Activated CD8-positive, alpha-beta memory T cell treated with anti-CD3 and anti-CD28 coated beads, Interleukin-2, amount 10 ng/mL, durations not matched to agents 7 days and 5 days (primary cell): ENCODE measurements at regions of chr22 and their contacts with region 1.

Region 1: DNA sequence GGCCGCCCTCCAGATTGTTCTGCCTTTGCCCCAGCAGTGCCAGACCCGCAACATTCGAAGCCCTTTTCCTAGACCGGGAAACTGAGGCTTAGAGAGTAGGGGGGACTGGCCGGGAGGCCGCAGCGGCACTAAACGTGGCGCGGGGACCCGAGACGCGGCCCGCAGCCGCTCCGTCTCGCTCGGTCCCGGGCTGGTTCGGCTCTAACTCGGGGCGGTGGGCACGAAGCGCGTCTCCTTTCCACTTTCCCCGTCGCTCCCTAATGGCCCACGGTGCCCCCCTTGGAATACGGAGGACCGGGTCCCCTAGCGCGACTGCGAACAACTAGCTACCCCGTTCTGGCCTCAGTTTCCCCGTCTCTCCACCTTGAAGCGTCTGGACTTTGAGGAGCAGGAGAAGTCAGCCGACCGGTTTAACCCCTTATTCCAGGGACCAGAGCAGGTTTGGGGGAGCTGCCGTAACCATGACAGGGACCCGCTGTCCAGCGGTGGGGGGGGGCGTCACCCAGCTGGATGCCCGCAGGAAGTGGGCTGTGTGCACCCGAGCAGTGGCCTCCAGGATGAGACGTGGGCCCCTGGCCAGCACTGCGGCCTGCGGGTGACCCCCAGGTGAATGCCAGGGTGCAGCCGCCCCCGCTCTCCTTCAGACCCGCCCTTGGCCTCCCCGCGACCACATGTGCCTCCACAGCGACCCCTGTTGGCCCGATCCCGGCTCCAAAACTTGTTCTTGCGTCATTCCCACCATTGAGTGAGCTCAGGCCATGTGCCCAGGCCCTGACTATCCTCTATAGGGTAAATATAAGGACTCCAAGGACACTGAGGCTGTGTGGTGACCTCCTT is 1.1 kb downstream of the CDC42EP1 start:
- DNase-seq: peak; percentile 87
- ATAC-seq: peak; percentile 52
- H3K4me3 Mint-ChIP-seq: peak overlapping the region; percentile 13
- H3K27ac Mint-ChIP-seq: no peak overlapping the region
- H3K4me1 Mint-ChIP-seq: peaks cover 23% of the 10 kb centered on the region
- H3K27me3 Mint-ChIP-seq: peaks cover 74% of the 10 kb centered on the region

Region 2: DNA sequence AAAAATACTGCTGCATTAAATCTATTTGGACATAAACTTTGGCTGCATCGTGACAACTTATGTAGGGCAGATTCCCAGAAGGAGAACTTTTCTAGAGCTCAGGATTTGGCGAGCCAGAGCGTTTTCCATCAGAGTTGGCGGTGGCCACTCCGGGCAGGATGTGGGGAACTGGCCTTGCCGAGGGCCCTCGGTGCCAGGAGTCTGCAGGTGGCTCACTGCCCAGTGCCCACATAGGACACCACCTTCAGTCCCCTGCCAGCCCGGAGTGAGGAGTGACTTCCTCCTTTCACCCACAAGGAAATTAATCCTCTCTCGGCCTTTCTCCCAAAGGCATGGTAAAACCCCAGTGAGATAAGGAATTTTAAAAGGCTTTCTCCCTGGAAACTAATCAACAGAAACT is 20.1 kb after region 1 on chr22:
- CTCF ChIA-PET with region 1: interaction called, 25 read pairs
- DNase-seq: no peak
- ATAC-seq: no peak
- H3K4me3 Mint-ChIP-seq: no peak overlapping the region
- H3K27ac Mint-ChIP-seq: no peak overlapping the region
- H3K4me1 Mint-ChIP-seq: peaks cover 16% of the 10 kb centered on the region
- H3K27me3 Mint-ChIP-seq: peaks cover 27% of the 10 kb centered on the region